ENCODE measurements at regions of chr11 and their contacts with region 1.

Region 1: DNA sequence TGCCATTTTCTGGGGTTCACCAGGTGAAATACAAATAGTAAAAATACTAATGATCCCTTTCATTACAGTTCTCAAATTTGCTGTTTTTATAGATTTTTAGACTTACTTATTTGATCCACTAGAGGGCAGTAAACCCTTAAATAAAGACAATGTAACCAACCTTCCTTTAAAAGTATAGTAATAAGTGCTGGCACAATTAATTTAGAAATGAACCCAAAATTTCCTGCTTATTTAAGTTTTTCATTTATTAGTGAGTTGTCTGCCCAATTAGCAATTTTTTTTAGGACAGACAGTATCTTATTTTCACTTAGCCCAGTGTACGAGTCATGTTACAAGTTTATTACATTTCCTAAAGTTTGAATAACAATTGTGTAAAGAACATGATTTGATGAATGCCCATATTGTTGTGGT is 4.7 kb downstream of the DDIAS start:
- DNase-seq: peak; percentile 15
- ATAC-seq: no peak
- H3K4me3 ChIP-seq: no peak overlapping the region
- H3K27ac ChIP-seq: no peak overlapping the region
- H3K4me1 ChIP-seq: peaks cover 6 to 10% of the 10 kb centered on the region in 2 experiments; a peak in 3 of 4 replicates
- H3K27me3 ChIP-seq: no peaks in the 10 kb centered on the region
- CTCF ChIP-seq: peak; percentile 32 to 71 (median 50); a peak in 4 of 6 replicates
- POLR2A ChIP-seq: no peak
- RAD21 ChIP-seq: peak; percentile 65

Region 2: DNA sequence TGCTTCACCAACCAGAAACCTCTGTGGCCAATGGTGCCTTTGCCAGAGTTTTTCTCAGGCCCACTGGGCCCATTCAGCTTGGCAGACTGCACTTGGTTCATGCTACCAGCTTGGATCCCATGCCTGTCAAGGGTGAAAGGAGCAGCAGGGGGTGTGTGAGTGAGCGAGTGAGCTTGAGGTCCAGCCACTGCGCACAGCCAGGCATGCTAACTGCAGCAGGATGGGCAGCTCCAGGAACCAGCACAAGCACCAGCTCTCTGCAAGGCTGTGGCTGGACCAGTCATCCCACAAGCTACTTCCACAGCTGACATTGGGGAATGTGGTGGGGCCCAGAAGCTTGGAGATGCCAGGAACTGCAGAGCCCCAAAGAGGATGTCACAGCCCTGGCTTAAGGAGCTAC is 36.1 kb after region 1 on chr11:
- CTCF ChIA-PET with region 1: no interaction called
- POLR2A ChIA-PET with region 1: no interaction called
- RAD21 ChIA-PET with region 1: no interaction called
- intact Hi-C with region 1: no loop called
- DNase-seq: no peak
- ATAC-seq: no peak
- H3K4me3 ChIP-seq: no peak overlapping the region
- H3K27ac ChIP-seq: no peak overlapping the region
- H3K4me1 ChIP-seq: no peaks in the 10 kb centered on the region
- H3K27me3 ChIP-seq: no peaks in the 10 kb centered on the region
- CTCF ChIP-seq: no peak
- POLR2A ChIP-seq: no peak
- RAD21 ChIP-seq: no peak

Region 3: GRCh38 chr11:83087035-83087434 is 180.8 kb after region 1 on chr11:
- CTCF ChIA-PET with region 1: no interaction called
- POLR2A ChIA-PET with region 1: no interaction called
- RAD21 ChIA-PET with region 1: no interaction called
- intact Hi-C with region 1: no loop called
- DNase-seq: no peak
- ATAC-seq: peak; percentile 64
- H3K4me3 ChIP-seq: no peak overlapping the region
- H3K27ac ChIP-seq: no peak overlapping the region
- H3K4me1 ChIP-seq: peaks cover 2 to 5% of the 10 kb centered on the region in 2 experiments; a peak in 3 of 4 replicates
- H3K27me3 ChIP-seq: no peaks in the 10 kb centered on the region
- CTCF ChIP-seq: peak; percentile 11 to 42 (median 35); a peak in 3 of 6 replicates
- POLR2A ChIP-seq: no peak
- RAD21 ChIP-seq: peak; percentile 67

Region 4: GRCh38 chr11:83193315-83194280 is 287.3 kb after region 1 on chr11 and contains the start of gene ANKRD42:
- CTCF ChIA-PET with region 1: no interaction called
- POLR2A ChIA-PET with region 1: no interaction called
- RAD21 ChIA-PET with region 1: no interaction called
- intact Hi-C with region 1: no loop called
- DNase-seq: peak; percentile 89
- ATAC-seq: peak; percentile 91
- H3K4me3 ChIP-seq: peak within 1 kb of the TSS; percentile 56 to 85
- H3K27ac ChIP-seq: peak within 1 kb of the TSS; percentile 65
- H3K4me1 ChIP-seq: peaks cover 12 to 19% of the 10 kb centered on the region in 2 experiments
- H3K27me3 ChIP-seq: no peaks in the 10 kb centered on the region
- CTCF ChIP-seq: no peak
- POLR2A ChIP-seq: peak; percentile 32
- RAD21 ChIP-seq: no peak
- total RNA-seq, gene ANKRD42: 5.4 TPM

Region 5: GRCh38 chr11:83249972-83250593 is 343.8 kb after region 1 on chr11:
- CTCF ChIA-PET with region 1: interaction called, 3 read pairs
- POLR2A ChIA-PET with region 1: no interaction called
- RAD21 ChIA-PET with region 1: no interaction called
- intact Hi-C with region 1: loop called (anchors 1 kb)
- DNase-seq: peak; percentile 21
- ATAC-seq: peak; percentile 86
- H3K4me3 ChIP-seq: no peak overlapping the region
- H3K27ac ChIP-seq: no peak overlapping the region
- H3K4me1 ChIP-seq: no peaks in the 10 kb centered on the region
- H3K27me3 ChIP-seq: no peaks in the 10 kb centered on the region
- CTCF ChIP-seq: peak; percentile 62 to 66 (median 64)
- POLR2A ChIP-seq: no peak
- RAD21 ChIP-seq: peak; percentile 66

Region 6: DNA sequence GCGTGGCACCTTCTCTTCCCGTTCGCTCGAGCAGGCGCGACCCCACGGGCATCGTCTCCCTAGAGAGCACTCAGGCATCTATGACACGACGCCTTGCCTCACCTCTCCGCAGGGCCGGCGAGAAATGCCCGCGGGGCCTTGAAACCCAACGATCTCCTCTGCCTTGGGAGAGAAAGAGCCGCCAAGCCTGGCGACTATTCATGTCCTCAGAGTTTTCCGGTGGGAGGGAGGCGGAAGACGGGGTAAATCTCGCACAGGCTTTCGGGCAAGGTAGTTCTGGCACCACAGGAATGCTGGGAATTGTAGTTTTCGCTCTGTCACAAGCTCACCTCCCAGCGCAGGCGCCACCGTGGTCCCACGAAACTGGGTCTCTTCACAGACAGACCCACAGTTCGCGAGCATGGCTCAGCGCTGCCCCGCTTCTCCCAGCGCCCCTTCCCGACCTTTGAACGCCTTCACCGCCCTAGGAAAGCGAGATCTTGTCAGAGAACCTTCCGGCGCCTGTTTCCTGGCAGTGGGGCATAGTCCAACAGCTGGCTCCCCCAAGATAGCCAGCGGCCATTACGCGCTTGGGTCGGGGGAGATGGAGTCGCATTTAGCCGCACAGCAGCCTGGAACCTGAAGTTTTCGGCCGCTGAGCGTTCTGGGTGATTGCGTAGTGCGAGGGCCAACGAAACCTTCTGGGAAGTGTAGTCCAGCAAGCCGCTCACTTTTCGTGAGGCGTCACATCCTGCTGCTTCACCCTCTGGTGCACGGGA is 379.7 kb after region 1 on chr11 and contains the start of gene CCDC90B:
- CTCF ChIA-PET with region 1: interaction called, 8 read pairs
- POLR2A ChIA-PET with region 1: interaction called, 3 read pairs
- RAD21 ChIA-PET with region 1: no interaction called
- intact Hi-C with region 1: loop called (anchors 2 kb)
- DNase-seq: peak; percentile 97
- ATAC-seq: peak; percentile 92
- H3K4me3 ChIP-seq: peak within 1 kb of the TSS; percentile 56 to 63
- H3K27ac ChIP-seq: peak within 1 kb of the TSS; percentile 69
- H3K4me1 ChIP-seq: peaks cover 0 to 16% of the 10 kb centered on the region in 2 experiments; a peak in 2 of 4 replicates
- H3K27me3 ChIP-seq: no peaks in the 10 kb centered on the region
- CTCF ChIP-seq: 0 out of 6 replicates have a peak, but pooled peaks of 1 of the 3 experiments have one; percentile 9
- POLR2A ChIP-seq: peak; percentile 91
- RAD21 ChIP-seq: no peak
- total RNA-seq, gene CCDC90B: 30.3 TPM

Region 7: GRCh38 chr11:83724008-83724461 is 817.8 kb after region 1 on chr11:
- CTCF ChIA-PET with region 1: no interaction called
- POLR2A ChIA-PET with region 1: no interaction called
- RAD21 ChIA-PET with region 1: no interaction called
- intact Hi-C with region 1: loop called (anchors 5 kb)
- DNase-seq: peak; percentile 23
- ATAC-seq: no peak
- H3K4me3 ChIP-seq: no peak overlapping the region
- H3K27ac ChIP-seq: no peak overlapping the region
- H3K4me1 ChIP-seq: no peaks in the 10 kb centered on the region
- H3K27me3 ChIP-seq: peaks cover 49% of the 10 kb centered on the region
- CTCF ChIP-seq: peak; percentile 26 to 37 (median 36); a peak in 4 of 6 replicates
- POLR2A ChIP-seq: no peak
- RAD21 ChIP-seq: peak; percentile 59